Activated CD8-positive, alpha-beta T cell treated with anti-CD3 and anti-CD28 coated beads for 36 hours (primary cell): ENCODE measurements at regions of chr4 and their contacts with region 1.

Region 1: DNA sequence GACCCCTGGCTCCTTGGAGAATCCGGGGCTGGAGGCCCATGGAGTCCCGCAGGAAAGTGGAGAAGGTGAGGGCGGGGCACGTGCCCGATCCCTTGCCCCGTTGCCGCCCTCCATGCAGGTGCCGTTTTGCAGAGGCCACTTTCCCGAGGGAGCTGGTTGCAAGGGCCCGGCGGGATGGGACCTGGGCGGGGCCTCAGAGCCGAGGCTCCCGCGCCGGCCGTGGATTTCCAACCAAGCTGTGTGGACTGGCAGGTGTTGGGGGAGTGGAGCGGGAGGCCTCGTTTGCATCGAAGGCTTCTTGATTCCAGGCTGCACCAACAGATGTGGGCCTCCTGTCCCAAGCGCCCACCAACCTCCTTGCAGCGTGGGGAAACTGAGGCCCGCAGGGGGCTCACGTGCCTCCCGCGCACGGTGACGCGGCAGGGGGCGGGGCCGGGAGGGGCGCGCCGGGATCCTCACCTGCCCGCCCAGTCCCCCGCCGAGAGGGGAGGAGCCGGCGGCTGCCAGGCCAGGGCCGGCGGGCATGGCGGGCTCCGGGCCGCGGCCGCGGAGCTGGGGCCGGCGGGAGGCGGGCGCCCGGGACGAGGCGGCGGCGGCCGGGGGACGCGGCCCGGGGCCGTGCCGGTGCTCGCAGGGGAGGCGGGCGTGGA is 24.9 kb downstream of the SH3BP2 start:
- DNase-seq: no peak
- ATAC-seq: peak; percentile 49
- H3K4me3 Mint-ChIP-seq: peak overlapping the region; percentile 73
- H3K27ac Mint-ChIP-seq: no peak overlapping the region
- H3K4me1 Mint-ChIP-seq: peaks cover 57% of the 10 kb centered on the region
- H3K27me3 Mint-ChIP-seq: no peaks in the 10 kb centered on the region
- CTCF ChIP-seq: no peak

Region 2: GRCh38 chr4:2832349-2833239 is 14.8 kb after region 1 on chr4:
- CTCF ChIA-PET with region 1: no interaction called
- POLR2A ChIA-PET with region 1: interaction called, 11 read pairs
- intact Hi-C with region 1: no loop called
- DNase-seq: no peak
- ATAC-seq: no peak
- H3K4me3 Mint-ChIP-seq: no peak overlapping the region
- H3K27ac Mint-ChIP-seq: no peak overlapping the region
- H3K4me1 Mint-ChIP-seq: peaks cover 29% of the 10 kb centered on the region
- H3K27me3 Mint-ChIP-seq: no peaks in the 10 kb centered on the region
- CTCF ChIP-seq: no peak